ENCODE measurements at regions of chr12 and their contacts with region 1.

Region 1: DNA sequence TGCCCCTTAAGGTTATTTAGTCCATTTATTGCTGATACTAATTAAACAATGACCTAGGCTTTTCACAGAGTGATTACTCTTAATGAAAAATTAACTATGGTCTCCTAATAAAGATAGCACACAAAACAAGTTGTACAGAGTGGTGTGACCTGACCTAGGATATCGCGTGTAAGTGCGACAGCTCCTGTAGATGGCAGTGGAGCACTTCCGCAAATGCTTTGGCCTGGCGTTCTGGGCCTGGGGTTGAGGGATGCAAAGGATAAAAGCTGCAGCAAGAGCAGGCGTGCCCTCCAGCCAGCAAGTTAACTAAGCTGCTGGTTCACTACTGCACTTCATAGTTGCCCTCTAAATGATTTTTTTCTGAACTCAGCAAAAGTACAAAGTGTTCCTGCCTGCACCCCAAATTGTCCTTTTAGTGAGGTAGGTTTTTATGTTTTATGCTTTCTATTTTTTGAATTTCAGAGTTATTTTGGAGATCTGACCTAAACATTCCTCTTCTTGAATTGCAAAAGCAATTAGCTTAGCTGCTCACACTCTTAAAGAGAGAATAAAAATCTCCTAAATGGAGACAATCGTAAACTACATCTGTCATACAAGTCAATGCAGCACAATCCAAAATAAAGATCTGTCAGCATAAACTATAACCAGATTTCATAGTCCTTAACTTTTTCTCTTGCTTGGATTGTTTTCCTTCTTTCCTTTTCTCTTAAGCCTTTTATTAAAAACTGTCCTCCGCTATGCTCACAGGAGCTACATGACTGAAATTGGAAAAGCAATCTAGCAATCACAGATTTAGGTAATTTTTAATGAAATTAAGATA is 379.6 kb downstream of the LRIG3 start:
- DNase-seq: peak; percentile 83
- H3K4me3 Mint-ChIP-seq: no peak overlapping the region
- H3K27ac Mint-ChIP-seq: no peak overlapping the region
- H3K4me1 Mint-ChIP-seq: peaks cover 20% of the 10 kb centered on the region
- H3K27me3 Mint-ChIP-seq: no peaks in the 10 kb centered on the region
- CTCF ChIP-seq: peak; percentile 83

Region 2: GRCh38 chr12:58346032-58346632 is 194.6 kb before region 1 on chr12:
- CTCF ChIA-PET with region 1: no interaction called
- intact Hi-C with region 1: loop called (anchors 2 kb)
- DNase-seq: no peak
- H3K4me3 Mint-ChIP-seq: no peak overlapping the region
- H3K27ac Mint-ChIP-seq: no peak overlapping the region
- H3K4me1 Mint-ChIP-seq: peaks cover 13% of the 10 kb centered on the region
- H3K27me3 Mint-ChIP-seq: no peaks in the 10 kb centered on the region
- CTCF ChIP-seq: peak; percentile 43

Region 3: DNA sequence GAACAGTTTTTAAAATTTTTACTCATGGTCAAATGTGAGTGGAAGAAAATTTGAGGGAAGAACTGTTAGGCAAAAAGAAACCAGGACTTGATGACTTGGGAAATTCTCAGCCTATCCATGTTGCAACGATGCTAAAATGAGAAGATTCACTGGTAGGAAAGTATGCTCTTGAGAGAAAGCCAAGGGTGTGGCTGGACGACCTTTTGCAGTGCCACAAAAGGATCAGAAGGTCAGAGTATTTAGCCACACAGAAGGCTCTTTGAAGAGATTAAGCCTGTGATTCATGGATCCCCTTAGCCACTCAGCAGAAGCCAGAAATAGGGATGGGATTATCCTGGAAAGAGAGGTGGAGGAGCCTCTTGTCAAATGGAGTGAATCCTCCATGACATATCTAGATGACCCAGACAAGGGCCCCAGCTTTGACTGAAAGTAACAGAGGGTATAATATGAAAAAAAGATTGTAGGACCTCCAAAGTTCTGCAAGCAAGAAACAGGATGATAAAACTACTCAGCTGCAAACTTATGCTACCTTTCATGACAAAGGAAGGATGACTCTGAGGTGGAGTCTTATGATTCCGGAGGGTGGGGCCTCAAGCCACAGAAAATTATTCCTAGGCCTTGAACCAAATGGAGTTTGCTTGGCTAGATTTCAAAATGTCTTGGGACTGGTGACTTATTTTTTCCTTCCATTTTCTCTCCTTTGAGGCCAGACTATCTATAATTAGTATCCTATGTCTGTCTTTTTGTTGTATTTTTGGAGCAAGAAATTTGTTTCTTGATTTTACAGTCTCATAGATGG is 43.0 kb after region 1 on chr12:
- CTCF ChIA-PET with region 1: no interaction called
- intact Hi-C with region 1: no loop called
- DNase-seq: no peak
- H3K4me3 Mint-ChIP-seq: no peak overlapping the region
- H3K27ac Mint-ChIP-seq: no peak overlapping the region
- H3K4me1 Mint-ChIP-seq: no peaks in the 10 kb centered on the region
- H3K27me3 Mint-ChIP-seq: no peaks in the 10 kb centered on the region
- CTCF ChIP-seq: no peak

Region 4: GRCh38 chr12:58615047-58615446 is 74.4 kb after region 1 on chr12:
- CTCF ChIA-PET with region 1: no interaction called
- intact Hi-C with region 1: no loop called
- DNase-seq: no peak
- H3K4me3 Mint-ChIP-seq: no peak overlapping the region
- H3K27ac Mint-ChIP-seq: no peak overlapping the region
- H3K4me1 Mint-ChIP-seq: no peaks in the 10 kb centered on the region
- H3K27me3 Mint-ChIP-seq: no peaks in the 10 kb centered on the region
- CTCF ChIP-seq: no peak

Region 5: DNA sequence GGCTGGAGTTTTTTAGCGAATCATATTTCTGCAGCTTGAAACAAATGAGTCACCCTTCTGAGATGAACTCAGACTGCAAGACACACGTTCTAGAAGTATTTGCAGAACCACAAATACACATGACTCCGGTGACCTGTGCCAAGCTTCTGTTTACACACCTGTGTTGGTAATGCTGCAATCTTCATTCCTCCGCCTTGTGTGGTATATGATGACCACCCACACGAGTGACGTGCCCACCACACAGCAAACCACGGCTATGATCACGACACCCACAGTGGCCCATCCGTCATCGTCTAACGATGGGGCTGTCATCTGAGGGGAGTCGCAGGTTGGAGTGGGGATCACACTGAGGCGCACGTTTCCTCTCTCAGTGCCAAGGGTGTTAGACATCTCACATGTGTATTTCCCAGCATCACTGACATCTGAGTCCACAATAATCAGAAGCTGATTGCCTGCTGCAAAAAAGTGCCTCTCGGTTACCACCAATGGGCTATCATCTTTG is 336.6 kb after region 1 on chr12:
- CTCF ChIA-PET with region 1: interaction called, 13 read pairs
- intact Hi-C with region 1: no loop called
- DNase-seq: peak; percentile 86
- H3K4me3 Mint-ChIP-seq: peak overlapping the region; percentile 22
- H3K27ac Mint-ChIP-seq: peak overlapping the region; percentile 86
- H3K4me1 Mint-ChIP-seq: peaks cover 55% of the 10 kb centered on the region
- H3K27me3 Mint-ChIP-seq: no peaks in the 10 kb centered on the region
- CTCF ChIP-seq: no peak

Region 6: GRCh38 chr12:58920102-58920960 is 379.6 kb after region 1 on chr12 and contains the start of gene LRIG3:
- CTCF ChIA-PET with region 1: interaction called, 3 read pairs
- intact Hi-C with region 1: loop called (anchors 10 kb)
- DNase-seq: peak; percentile 96
- H3K4me3 Mint-ChIP-seq: peak within 1 kb of the TSS; percentile 93
- H3K27ac Mint-ChIP-seq: peak within 1 kb of the TSS; percentile 99
- H3K4me1 Mint-ChIP-seq: peaks cover 33% of the 10 kb centered on the region
- H3K27me3 Mint-ChIP-seq: no peaks in the 10 kb centered on the region
- CTCF ChIP-seq: no peak
- total RNA-seq, gene LRIG3: 261 and 357 TPM in 2 replicates

Region 7: GRCh38 chr12:59149997-59150642 is 609.4 kb after region 1 on chr12:
- CTCF ChIA-PET with region 1: interaction called, 10 read pairs
- intact Hi-C with region 1: loop called (anchors 1 kb)
- DNase-seq: peak; percentile 53
- H3K4me3 Mint-ChIP-seq: no peak overlapping the region
- H3K27ac Mint-ChIP-seq: no peak overlapping the region
- H3K4me1 Mint-ChIP-seq: no peaks in the 10 kb centered on the region
- H3K27me3 Mint-ChIP-seq: no peaks in the 10 kb centered on the region
- CTCF ChIP-seq: peak; percentile 91

Region 8: GRCh38 chr12:59372956-59373355 is 832.3 kb after region 1 on chr12:
- CTCF ChIA-PET with region 1: no interaction called
- intact Hi-C with region 1: loop called (anchors 1 kb)
- DNase-seq: peak; percentile 51
- H3K4me3 Mint-ChIP-seq: no peak overlapping the region
- H3K27ac Mint-ChIP-seq: no peak overlapping the region
- H3K4me1 Mint-ChIP-seq: no peaks in the 10 kb centered on the region
- H3K27me3 Mint-ChIP-seq: no peaks in the 10 kb centered on the region
- CTCF ChIP-seq: no peak